A673 (cell line): ENCODE measurements at regions of chr20 and their contacts with region 1.

Region 1: GRCh38 chr20:34449674-34450592 is 66.3 kb upstream of the DYNLRB1 start:
- DNase-seq: no peak
- H3K4me3 ChIP-seq: no peak overlapping the region
- H3K27ac ChIP-seq: no peak overlapping the region
- H3K4me1 ChIP-seq: no peaks in the 10 kb centered on the region
- H3K27me3 ChIP-seq: no peaks in the 10 kb centered on the region
- CTCF ChIP-seq: no peak

Region 2: DNA sequence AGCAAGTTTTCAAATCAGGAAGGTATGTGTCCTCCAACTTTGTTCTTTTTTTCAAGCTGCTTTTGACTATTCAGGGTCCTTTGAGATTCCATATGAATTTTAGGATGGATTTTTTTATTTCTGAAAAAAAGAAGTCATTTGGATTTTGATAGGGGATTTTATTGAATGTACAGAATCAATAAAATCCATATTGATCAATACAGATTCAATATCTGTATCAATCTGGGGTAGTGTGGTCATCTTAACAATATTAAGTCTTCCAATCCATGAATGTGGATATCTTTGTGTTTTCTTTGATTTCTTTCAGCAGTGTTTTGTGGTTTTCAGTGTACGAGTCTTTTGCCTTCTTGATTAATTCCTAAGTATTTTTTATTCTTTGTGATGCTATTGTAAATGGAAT is 15.4 kb after region 1 on chr20:
- CTCF ChIA-PET with region 1: no interaction called
- POLR2A ChIA-PET with region 1: interaction called, 10 read pairs
- intact Hi-C with region 1: no loop called
- DNase-seq: no peak
- H3K4me3 ChIP-seq: no peak overlapping the region
- H3K27ac ChIP-seq: no peak overlapping the region
- H3K4me1 ChIP-seq: no peaks in the 10 kb centered on the region
- H3K27me3 ChIP-seq: no peaks in the 10 kb centered on the region
- CTCF ChIP-seq: no peak

Region 3: GRCh38 chr20:34538671-34539123 is 88.8 kb after region 1 on chr20:
- CTCF ChIA-PET with region 1: no interaction called
- POLR2A ChIA-PET with region 1: no interaction called
- intact Hi-C with region 1: no loop called
- DNase-seq: peak; percentile 45
- H3K4me3 ChIP-seq: no peak overlapping the region
- H3K27ac ChIP-seq: no peak overlapping the region
- H3K4me1 ChIP-seq: no peaks in the 10 kb centered on the region
- H3K27me3 ChIP-seq: no peaks in the 10 kb centered on the region
- CTCF ChIP-seq: peak; percentile 67

Region 4: DNA sequence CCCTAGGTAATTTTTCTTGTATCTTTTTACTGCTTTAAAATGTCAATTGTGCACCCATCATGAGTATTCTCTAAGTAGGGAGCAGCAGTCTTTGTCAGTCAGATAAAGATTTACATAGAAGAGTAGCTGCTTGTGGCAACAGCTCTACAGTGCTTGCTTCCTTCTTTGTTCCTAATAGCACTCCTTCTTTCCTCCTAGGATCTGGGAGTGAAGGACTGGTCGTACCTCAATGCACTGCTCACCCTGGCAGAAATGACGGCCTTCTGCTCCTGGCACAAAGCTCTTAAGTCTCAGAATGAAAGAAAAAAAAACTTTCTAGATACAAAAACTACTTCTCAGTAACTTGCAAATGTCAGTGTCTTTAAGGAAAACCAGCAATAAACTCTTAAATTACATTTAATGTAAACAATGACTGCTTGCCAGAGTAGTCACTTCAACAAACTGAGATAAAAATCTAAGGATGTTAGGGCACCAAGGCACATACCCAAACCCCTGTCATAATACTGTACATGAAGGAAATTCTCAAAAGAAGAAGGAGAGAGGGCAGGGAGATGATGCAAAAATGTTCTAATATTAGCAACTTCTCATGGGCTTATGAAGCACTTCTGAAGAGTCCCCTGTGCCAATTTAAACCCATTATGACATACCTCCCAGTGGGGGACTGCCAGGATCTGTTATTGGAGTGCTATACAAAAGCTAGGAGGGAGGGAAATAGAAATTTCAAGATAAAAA is 341.5 kb after region 1 on chr20:
- CTCF ChIA-PET with region 1: no interaction called
- POLR2A ChIA-PET with region 1: no interaction called
- intact Hi-C with region 1: no loop called
- DNase-seq: peak; percentile 83
- H3K4me3 ChIP-seq: no peak overlapping the region
- H3K27ac ChIP-seq: peak overlapping the region; percentile 92
- H3K4me1 ChIP-seq: peaks cover 33% of the 10 kb centered on the region
- H3K27me3 ChIP-seq: no peaks in the 10 kb centered on the region
- CTCF ChIP-seq: no peak